A549 (cell line): ENCODE measurements at regions of chr2 and their contacts with region 1.

Region 1: DNA sequence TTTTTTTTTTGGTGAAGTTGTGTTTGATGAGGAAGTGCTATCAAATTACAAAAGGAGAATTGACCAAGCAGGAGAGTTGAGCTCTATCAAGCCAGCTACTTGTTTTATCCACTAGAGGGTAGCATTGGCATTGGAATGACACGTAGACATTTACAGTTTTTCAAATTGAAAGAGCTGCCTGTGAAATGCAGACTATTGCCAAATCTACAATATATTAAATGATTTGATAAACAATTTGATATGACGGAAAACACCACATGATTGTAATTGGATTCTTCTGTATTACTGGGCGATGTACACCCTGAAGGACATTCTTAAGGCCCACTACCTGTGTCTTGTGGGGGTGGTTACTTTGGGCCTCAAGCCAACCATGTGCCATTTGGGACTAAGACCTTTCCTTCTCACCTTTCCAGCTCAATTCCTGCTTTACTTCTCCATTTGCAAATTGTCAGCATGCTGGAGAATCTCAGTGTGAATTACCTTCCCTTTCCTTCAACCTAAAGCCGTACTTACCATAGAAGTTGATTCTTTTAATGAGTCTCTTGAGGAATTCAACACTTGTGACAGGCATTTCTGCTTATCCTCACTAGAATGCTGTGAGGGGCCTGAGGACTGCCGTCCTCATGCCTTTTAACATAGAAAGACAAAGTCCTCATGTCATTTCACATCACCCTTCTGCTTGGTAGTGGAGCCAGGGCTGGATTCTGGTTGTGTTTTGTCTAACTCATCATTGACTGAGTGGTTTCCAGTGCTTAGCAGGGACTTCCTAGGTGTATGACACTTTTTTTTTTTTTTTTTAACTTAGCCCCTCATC is 134.8 kb upstream of the THUMPD2 start:
- DNase-seq: peak; percentile 38 to 73
- ATAC-seq: peak; percentile 81 to 91
- H3K4me3 ChIP-seq: no peak overlapping the region
- H3K27ac ChIP-seq: no peak overlapping the region
- H3K4me1 ChIP-seq: no peaks in the 10 kb centered on the region
- CTCF ChIP-seq: peak; percentile 94
- EP300 ChIP-seq: no peak
- POLR2A ChIP-seq: no peak
- RAD21 ChIP-seq: peak; percentile 94 to 95

Region 2: DNA sequence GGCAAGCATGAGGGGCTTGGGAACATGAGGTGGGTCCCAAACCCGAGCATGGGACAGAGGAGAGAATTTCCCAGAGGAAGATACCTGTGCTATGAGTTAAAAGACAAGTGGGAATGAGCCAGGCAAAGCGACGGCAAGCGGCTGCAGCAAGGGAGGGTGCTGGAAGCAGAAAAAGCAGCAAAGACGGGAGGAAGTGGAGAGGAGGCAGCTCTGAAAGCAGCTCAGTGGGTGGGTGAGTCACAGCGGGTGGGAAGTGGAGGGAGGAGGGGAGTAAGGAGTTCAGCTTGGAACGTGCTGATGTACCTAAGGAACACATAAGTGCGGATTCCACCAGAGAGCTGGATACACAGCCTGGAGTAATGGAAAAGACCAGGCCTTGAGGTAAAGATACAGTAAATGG is 176.2 kb before region 1 on chr2:
- CTCF ChIA-PET with region 1: no interaction called
- POLR2A ChIA-PET with region 1: no interaction called
- DNase-seq: no peak
- ATAC-seq: no peak
- H3K4me3 ChIP-seq: no peak overlapping the region
- H3K27ac ChIP-seq: no peak overlapping the region
- H3K4me1 ChIP-seq: no peaks in the 10 kb centered on the region
- CTCF ChIP-seq: no peak
- EP300 ChIP-seq: no peak
- POLR2A ChIP-seq: no peak
- RAD21 ChIP-seq: no peak

Region 3: DNA sequence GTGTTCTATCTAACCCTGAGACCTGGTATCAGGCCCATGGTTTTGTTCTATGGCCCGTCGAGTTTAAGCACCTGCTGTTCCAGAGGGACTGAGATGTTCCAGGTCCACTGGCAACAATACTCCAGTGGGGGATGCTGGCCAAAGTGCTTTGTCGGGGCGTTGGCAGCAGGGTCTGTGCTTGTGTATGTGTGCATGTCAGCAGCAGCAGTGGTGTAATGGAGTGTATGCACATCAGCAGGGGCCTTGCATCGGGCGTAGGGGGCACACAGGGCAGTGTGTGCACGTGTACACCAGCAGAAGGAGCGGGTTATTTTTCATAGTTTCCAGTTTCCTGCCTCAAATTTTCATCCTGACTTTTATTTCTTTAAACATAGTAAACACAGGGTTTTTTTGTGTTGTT is 97.0 kb before region 1 on chr2:
- CTCF ChIA-PET with region 1: no interaction called
- POLR2A ChIA-PET with region 1: no interaction called
- DNase-seq: no peak
- ATAC-seq: peak in 1 of 2 experiments; percentile 47; a peak in 1 of 6 replicates
- H3K4me3 ChIP-seq: no peak overlapping the region
- H3K27ac ChIP-seq: no peak overlapping the region
- H3K4me1 ChIP-seq: no peaks in the 10 kb centered on the region
- CTCF ChIP-seq: no peak
- EP300 ChIP-seq: no peak
- POLR2A ChIP-seq: no peak
- RAD21 ChIP-seq: no peak

Region 4: GRCh38 chr2:39855871-39856270 is 58.0 kb before region 1 on chr2:
- CTCF ChIA-PET with region 1: no interaction called
- POLR2A ChIA-PET with region 1: no interaction called
- DNase-seq: no peak
- ATAC-seq: no peak
- H3K4me3 ChIP-seq: no peak overlapping the region
- H3K27ac ChIP-seq: no peak overlapping the region
- H3K4me1 ChIP-seq: no peaks in the 10 kb centered on the region
- CTCF ChIP-seq: no peak
- EP300 ChIP-seq: no peak
- POLR2A ChIP-seq: no peak
- RAD21 ChIP-seq: no peak

Region 5: GRCh38 chr2:39932198-39932597 is 18.3 kb after region 1 on chr2:
- CTCF ChIA-PET with region 1: interaction called, 10 read pairs
- POLR2A ChIA-PET with region 1: no interaction called
- DNase-seq: no peak
- ATAC-seq: no peak
- H3K4me3 ChIP-seq: no peak overlapping the region
- H3K27ac ChIP-seq: no peak overlapping the region
- H3K4me1 ChIP-seq: no peaks in the 10 kb centered on the region
- CTCF ChIP-seq: no peak
- EP300 ChIP-seq: no peak
- POLR2A ChIP-seq: no peak
- RAD21 ChIP-seq: no peak

Region 6: DNA sequence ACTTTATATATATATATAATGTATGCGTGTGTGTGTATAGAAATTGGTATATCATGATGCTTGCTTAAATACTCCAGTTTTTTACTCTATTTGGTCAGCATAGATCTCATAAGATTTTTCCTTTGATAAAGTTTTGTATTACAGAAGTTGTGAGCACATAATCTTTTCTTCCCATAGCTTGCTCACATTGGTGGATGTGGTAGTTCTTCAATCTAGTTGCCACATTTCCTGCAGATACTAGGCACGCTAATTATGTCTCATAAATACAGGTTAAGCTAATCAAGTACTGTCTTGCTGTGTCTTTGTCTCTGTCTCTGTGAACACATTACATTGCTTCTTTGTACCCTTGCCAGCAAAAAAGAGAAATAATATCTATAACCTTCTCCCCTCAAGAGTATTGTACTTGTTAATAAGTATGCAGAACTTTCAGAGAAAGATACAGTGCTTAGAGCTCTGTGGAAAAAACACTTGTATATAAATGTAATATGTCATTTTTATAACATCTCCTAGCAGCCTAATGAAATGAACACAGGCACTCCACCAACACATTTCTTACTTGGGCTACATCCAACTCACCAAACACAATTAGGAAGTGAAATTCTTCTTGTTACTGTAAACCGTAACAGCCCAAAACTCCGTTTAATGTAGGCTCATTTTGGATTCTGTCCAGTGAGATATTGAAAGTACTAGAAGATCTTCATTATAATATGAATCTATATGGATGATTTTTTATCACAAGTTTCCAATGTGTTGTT is 844.7 kb after region 1 on chr2:
- CTCF ChIA-PET with region 1: interaction called, 10 read pairs
- POLR2A ChIA-PET with region 1: no interaction called
- DNase-seq: no peak
- ATAC-seq: no peak
- H3K4me3 ChIP-seq: no peak overlapping the region
- H3K27ac ChIP-seq: no peak overlapping the region
- H3K4me1 ChIP-seq: no peaks in the 10 kb centered on the region
- CTCF ChIP-seq: no peak
- EP300 ChIP-seq: no peak
- POLR2A ChIP-seq: no peak
- RAD21 ChIP-seq: no peak